ENCODE measurements at regions of chr1 and their contacts with region 1.

Region 1: GRCh38 chr1:204363335-204364124 is 3.8 kb upstream of the PLEKHA6 start:
- DNase-seq: peak; percentile 69

Region 2: GRCh38 chr1:204162231-204163074 is 201.1 kb before region 1 on chr1:
- in situ Hi-C with region 1: loop called (anchors 25 kb)
- DNase-seq: peak; percentile 74

Region 3: GRCh38 chr1:204619721-204620120 is 256.2 kb after region 1 on chr1:
- in situ Hi-C with region 1: no loop called
- DNase-seq: no peak